IMR-90 (cell line): ENCODE measurements at regions of chr6 and their contacts with region 1.

Region 1: DNA sequence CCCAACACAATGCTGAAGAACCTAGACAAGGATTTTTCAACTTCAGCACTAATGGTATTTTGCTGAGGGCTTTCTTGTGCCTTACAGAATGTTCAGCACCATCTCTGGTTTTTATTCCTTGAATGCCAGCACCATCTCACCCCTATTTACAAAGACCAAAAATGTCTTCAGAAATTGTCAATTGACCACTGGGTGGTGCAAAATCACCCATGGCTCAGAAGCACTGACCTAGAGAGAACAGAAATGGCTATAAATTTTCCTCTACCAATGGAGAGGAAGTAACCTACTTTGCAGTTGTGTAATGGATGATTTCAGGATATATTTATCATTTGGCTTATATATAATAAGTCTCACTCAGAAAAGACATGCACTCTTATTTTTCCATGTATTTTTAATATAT is 431.0 kb upstream of the IRAK1BP1 start:
- DNase-seq: peak; percentile 33
- ATAC-seq: peak; percentile 65
- H3K4me3 ChIP-seq: no peak overlapping the region
- H3K27ac ChIP-seq: no peak overlapping the region
- H3K4me1 ChIP-seq: no peaks in the 10 kb centered on the region
- H3K27me3 ChIP-seq: no peaks in the 10 kb centered on the region
- CTCF ChIP-seq: peak; percentile 48
- POLR2A ChIP-seq: no peak
- RAD21 ChIP-seq: peak; percentile 52

Region 2: GRCh38 chr6:78611958-78612357 is 175.6 kb after region 1 on chr6:
- CTCF ChIA-PET with region 1: no interaction called
- POLR2A ChIA-PET with region 1: no interaction called
- dilution Hi-C with region 1: no loop called
- in situ Hi-C with region 1: no loop called
- intact Hi-C with region 1: loop called (anchors 5 kb)
- DNase-seq: no peak
- ATAC-seq: peak; percentile 61; the same call in 1 of the 2 replicates
- H3K4me3 ChIP-seq: no peak overlapping the region
- H3K27ac ChIP-seq: no peak overlapping the region
- H3K4me1 ChIP-seq: peaks cover 11% of the 10 kb centered on the region
- H3K27me3 ChIP-seq: no peaks in the 10 kb centered on the region
- CTCF ChIP-seq: peak; percentile 62
- POLR2A ChIP-seq: no peak
- RAD21 ChIP-seq: peak; percentile 37

Region 3: DNA sequence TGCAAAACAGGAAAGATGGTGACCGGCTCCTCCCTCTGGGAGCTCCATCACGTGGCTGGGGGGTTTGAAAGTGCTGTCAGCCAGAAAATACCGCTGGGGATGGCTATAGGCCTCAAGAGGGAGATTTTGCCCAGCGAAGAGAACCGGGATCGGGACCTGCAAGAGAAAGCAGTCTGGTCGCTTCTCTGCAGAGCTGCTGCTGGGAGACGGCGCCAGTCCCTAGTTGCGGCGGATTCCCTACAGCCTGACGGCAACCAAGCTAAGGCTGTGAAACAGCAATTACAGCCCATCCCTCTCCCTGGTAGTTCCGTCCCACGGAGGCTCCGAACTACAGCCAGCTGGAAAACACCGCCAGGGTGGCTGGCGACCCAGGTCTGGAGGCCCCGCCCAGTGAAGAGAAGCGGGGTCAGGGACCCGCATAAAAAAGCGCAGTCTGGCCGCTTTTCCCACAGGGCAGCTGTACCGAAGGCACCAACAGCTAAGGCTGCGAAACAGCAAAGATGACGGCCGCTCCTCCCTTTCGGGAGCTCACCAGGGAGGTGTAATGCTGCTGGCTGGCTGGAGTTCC is 192.9 kb after region 1 on chr6:
- CTCF ChIA-PET with region 1: no interaction called
- POLR2A ChIA-PET with region 1: no interaction called
- dilution Hi-C with region 1: no loop called
- in situ Hi-C with region 1: no loop called
- intact Hi-C with region 1: loop called (anchors 5 kb)
- DNase-seq: peak; percentile 14
- ATAC-seq: peak; percentile 76
- H3K4me3 ChIP-seq: peak overlapping the region; percentile 43
- H3K27ac ChIP-seq: no peak overlapping the region
- H3K4me1 ChIP-seq: no peaks in the 10 kb centered on the region
- H3K27me3 ChIP-seq: no peaks in the 10 kb centered on the region
- CTCF ChIP-seq: no peak
- POLR2A ChIP-seq: no peak
- RAD21 ChIP-seq: no peak

Region 4: DNA sequence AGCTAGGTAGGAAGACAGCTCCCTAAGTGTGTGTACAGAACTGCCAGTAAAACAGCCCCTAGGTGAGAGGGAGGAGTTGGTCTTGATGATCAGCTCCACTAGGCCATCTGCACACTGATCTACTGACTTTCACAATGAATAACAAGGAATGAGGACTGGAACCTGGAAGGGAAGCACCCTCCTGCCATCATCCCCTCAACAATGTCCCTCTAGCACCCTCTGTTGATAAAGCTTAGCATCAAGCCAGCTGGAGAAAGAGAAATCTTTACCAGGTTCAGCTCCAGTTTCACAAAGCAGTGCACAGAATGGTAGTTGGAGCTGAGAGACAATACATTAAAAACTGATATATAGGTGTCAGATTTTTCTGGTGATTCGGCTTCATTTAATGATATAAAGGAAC is 373.8 kb after region 1 on chr6:
- CTCF ChIA-PET with region 1: no interaction called
- POLR2A ChIA-PET with region 1: no interaction called
- dilution Hi-C with region 1: no loop called
- in situ Hi-C with region 1: loop called (anchors 25 kb)
- intact Hi-C with region 1: loop called (anchors 1 kb)
- DNase-seq: peak; percentile 50
- ATAC-seq: peak; percentile 89
- H3K4me3 ChIP-seq: no peak overlapping the region
- H3K27ac ChIP-seq: no peak overlapping the region
- H3K4me1 ChIP-seq: no peaks in the 10 kb centered on the region
- H3K27me3 ChIP-seq: no peaks in the 10 kb centered on the region
- CTCF ChIP-seq: peak; percentile 77
- POLR2A ChIP-seq: no peak
- RAD21 ChIP-seq: peak; percentile 87